Ovary (tissue), 10 donors: ENCODE measurements at regions of chr1 and their contacts with region 1.

Region 1: DNA sequence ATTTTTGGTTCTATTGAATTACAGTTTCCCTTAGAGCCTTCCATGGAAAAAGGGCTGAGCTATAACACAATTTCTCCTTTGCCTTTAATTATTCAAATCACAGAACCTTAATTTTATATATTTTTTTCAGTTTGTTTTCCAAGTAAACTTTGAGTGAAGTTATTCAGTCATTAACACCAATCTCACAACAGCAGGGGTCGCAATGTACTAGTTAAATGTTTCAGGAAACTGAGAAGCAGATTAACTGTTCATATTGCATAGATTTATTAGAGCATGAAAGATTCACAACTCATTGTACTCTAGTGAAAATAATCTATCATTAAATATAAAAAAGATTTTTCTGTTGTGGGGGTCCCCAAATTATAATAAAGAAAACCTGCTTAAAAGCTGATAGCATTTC is 64.1 kb downstream of the KIFAP3 start:
- DNase-seq: peak in 4 of 5 donors; percentile 8 to 42 (median 26)
- H3K4me3 ChIP-seq: no peak overlapping the region
- H3K27ac ChIP-seq: no peak overlapping the region
- H3K4me1 ChIP-seq: no peaks in the 10 kb centered on the region
- H3K27me3 ChIP-seq: no peaks in the 10 kb centered on the region
- CTCF ChIP-seq: peak in 1 of 3 donors; percentile 49
- EP300 ChIP-seq: no peak
- POLR2A ChIP-seq: no peak

Region 2: GRCh38 chr1:170881268-170882265 is 871.1 kb after region 1 on chr1:
- intact Hi-C with region 1: loop called in 1 of 4 experiments (anchors 5 kb)
- DNase-seq: peak in 1 of 5 donors; percentile 19
- H3K4me3 ChIP-seq: no peak overlapping the region
- H3K27ac ChIP-seq: no peak overlapping the region
- H3K4me1 ChIP-seq: no peaks in the 10 kb centered on the region
- H3K27me3 ChIP-seq: no peaks in the 10 kb centered on the region
- CTCF ChIP-seq: peak; percentile 53 to 84 (median 79)
- EP300 ChIP-seq: no peak
- POLR2A ChIP-seq: no peak